SK-N-SH (cell line): ENCODE measurements at regions of chr10 and their contacts with region 1.

Region 1: DNA sequence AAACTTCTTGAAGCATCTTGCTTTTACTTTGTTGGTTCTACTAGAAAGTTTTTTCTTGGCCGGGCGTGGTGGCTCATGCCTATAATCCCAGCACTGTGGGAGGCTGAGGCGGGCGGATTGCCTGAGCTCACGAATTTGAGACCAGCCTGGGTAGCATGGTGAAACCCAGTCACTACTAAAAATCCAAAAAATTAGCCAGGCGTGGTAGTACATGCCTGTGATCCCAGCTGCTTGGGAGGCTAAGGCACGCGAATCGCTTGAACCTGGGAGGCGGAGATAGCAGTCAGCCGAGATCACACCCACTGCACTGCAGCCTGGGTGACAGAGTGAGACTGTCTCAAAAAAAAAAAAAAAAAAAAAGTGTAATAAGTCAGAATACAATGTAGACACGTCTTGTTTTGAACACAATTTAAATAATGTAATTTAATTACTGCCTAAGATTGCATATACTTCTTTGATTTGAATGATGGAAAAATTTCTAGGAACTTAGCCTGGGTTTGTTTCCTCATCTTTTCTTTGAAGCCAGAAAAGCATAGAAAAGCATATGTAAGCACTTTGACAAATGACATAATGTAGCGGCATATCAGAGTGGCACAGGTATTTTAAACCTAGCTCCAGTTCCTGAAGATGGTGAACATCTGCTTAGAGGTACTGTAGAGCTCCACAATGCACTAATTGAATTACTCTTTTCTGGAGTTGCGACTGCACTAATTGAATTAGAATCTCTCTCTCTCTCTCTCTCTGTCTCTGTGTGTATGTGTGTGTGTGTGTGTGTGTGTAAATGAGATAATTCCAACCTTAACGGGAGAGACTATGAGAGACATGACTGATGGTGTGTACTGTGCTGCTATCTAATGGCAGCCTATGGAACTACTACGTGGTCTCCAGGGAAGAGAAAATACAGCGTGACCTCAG is 87.8 kb downstream of the BTRC start:
- DNase-seq: peak; percentile 65
- H3K4me3 ChIP-seq: no peak overlapping the region
- H3K27ac ChIP-seq: no peak overlapping the region
- H3K4me1 ChIP-seq: peaks cover 0 to 9% of the 10 kb centered on the region in 2 experiments; a peak in 2 of 4 replicates
- H3K27me3 ChIP-seq: no peaks in the 10 kb centered on the region
- CTCF ChIP-seq: peak; percentile 68
- EP300 ChIP-seq: no peak
- RAD21 ChIP-seq: peak; percentile 90

Region 2: DNA sequence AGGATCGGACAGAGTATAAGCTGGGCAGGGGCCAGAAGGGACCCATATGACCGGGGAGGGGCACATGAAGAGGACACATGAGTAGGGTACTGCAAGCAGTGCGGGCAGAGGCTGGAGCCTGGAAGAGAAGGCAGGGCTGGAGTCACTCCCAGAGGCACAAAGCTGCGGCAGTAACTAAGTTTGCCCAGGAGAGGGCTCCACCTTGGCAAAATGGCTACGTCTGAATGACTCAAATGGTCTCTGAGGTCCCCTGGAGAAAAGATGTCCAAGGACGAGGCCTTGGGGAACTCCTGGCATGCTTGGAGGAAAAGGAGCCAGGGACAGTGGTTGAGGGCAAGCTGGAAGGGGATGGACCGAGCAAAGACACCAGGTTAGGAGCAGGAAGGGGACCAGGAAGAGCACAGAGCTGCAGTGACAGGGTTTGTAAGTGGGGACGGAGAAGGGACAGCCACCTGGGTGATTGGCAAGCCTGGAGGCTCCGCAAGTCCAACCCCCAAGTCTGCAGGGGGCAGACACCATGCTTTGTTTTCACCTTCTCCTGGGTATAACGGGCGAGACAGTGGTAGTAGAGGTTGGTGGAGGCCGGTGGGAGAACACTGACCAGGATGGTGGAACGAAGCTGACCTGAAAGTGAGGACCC is 169.4 kb before region 1 on chr10:
- CTCF ChIA-PET with region 1: interaction called, 13 read pairs
- POLR2A ChIA-PET with region 1: no interaction called
- DNase-seq: peak; percentile 83
- H3K4me3 ChIP-seq: no peak overlapping the region
- H3K27ac ChIP-seq: no peak overlapping the region
- H3K4me1 ChIP-seq: no peaks in the 10 kb centered on the region; a peak in 1 of 4 replicates
- H3K27me3 ChIP-seq: peaks cover 8% of the 10 kb centered on the region; the same call in 1 of the 2 replicates
- CTCF ChIP-seq: peak; percentile 76
- EP300 ChIP-seq: no peak
- RAD21 ChIP-seq: peak; percentile 66

Region 3: DNA sequence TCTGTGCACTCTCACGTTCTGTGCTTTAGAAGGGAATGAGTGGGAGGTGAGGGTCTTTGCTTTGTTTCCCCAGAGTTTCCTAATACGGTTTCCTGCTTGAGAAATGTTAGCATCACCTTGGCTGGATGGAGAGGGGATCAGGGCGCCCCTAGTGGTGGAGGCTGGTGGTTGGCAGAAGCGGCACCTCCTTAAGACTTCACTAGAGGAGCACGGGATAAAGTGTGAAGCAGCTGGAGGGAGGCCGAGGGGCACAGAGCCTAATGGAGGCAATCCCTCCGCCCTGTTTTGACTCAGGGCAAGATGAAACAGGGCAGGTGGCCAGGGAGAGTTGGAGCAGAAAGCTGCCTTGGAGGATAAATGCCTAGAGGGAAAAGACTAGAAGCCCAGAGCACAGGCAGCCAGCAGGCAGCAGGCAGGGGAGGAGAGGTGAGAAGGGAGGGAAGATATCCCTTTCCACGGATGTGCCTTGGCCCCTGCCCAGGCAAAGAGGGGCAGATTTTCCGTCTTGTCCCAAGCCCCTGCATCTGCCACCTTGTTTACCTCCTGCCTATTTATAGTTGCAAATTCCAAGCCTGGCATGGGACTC is 143.8 kb before region 1 on chr10:
- CTCF ChIA-PET with region 1: interaction called, 243 read pairs
- POLR2A ChIA-PET with region 1: interaction called, 4 read pairs
- DNase-seq: peak; percentile 61
- H3K4me3 ChIP-seq: peak overlapping the region in 1 of 2 experiments; percentile 33; a peak in 1 of 4 replicates
- H3K27ac ChIP-seq: no peak overlapping the region
- H3K4me1 ChIP-seq: peaks cover 0 to 5% of the 10 kb centered on the region in 2 experiments; a peak in 1 of 4 replicates
- H3K27me3 ChIP-seq: peaks cover 29% of the 10 kb centered on the region; the same call in 1 of the 2 replicates
- CTCF ChIP-seq: peak; percentile 78
- EP300 ChIP-seq: no peak
- RAD21 ChIP-seq: peak; percentile 29

Region 4: GRCh38 chr10:101353692-101354327 is 88.0 kb before region 1 on chr10 and contains the start of gene BTRC:
- CTCF ChIA-PET with region 1: interaction called, 11 read pairs
- POLR2A ChIA-PET with region 1: no interaction called
- DNase-seq: peak; percentile 93
- H3K4me3 ChIP-seq: peak within 1 kb of the TSS; percentile 66 to 84
- H3K27ac ChIP-seq: peak within 1 kb of the TSS; percentile 83 to 89
- H3K4me1 ChIP-seq: peaks cover 7 to 9% of the 10 kb centered on the region in 2 experiments; a peak in 3 of 4 replicates
- H3K27me3 ChIP-seq: no peaks in the 10 kb centered on the region; the same call in 1 of the 2 replicates
- CTCF ChIP-seq: no peak
- EP300 ChIP-seq: no peak
- RAD21 ChIP-seq: no peak; the same call in 1 of the 2 replicates
- polyA plus RNA-seq, gene BTRC: 6.5 and 8.1 TPM in 2 replicates

Region 5: GRCh38 chr10:101453791-101454718 is 12.3 kb after region 1 on chr10:
- CTCF ChIA-PET with region 1: interaction called, 15 read pairs
- POLR2A ChIA-PET with region 1: interaction called, 3 read pairs
- DNase-seq: no peak
- H3K4me3 ChIP-seq: no peak overlapping the region
- H3K27ac ChIP-seq: peak overlapping the region in 1 of 2 experiments; percentile 12; a peak in 1 of 4 replicates
- H3K4me1 ChIP-seq: peaks cover 0 to 34% of the 10 kb centered on the region in 2 experiments; a peak in 2 of 4 replicates
- H3K27me3 ChIP-seq: no peaks in the 10 kb centered on the region
- CTCF ChIP-seq: no peak
- EP300 ChIP-seq: no peak
- RAD21 ChIP-seq: no peak

Region 6: DNA sequence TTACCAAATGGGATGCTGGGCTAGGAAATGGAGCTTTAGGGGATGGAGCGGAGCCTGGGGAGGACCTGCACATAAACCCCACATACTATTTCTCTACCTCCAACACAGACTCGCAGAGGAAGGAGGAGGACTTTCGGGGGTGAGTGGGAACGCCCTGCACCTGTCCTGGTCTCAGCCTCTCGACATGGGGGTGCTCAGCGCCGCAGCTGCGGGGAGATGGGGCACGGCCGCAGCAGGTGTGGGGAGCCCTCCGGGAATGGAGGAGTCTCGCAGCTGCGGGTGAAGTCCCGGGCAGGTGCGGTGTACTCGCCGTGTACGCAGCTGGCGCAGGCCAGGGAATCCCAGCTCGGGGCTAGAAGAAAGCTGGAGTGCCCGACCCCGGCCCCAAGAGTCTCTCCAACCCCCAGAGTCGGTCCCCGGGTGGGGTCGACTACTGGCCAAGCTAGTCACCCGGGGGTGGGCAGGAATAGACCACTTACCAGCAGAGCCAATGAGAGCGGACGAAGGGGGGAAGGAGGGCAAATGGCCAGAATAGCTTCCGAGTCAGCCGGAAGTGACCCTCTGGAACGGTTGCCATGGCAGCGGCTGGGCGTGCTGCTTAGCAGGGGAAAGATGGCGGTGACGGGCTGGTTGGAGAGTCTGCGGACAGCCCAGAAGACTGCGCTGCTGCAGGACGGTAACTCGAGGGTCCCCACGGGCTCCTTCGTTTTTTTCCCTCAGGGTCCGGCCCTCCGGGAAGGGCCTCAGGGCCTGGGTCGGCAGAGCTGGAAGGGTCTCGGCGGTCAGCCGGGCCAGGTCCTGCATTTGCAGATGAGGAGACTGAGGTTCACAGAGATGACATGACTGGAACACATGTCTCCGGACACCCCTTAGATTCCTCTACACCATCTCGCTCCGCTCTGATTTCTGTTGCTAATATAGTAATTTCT is 146.2 kb after region 1 on chr10 and contains the starts of genes DPCD and POLL:
- CTCF ChIA-PET with region 1: no interaction called
- POLR2A ChIA-PET with region 1: no interaction called
- DNase-seq: peak; percentile 97
- H3K4me3 ChIP-seq: peak within 1 kb of the TSS; percentile 92 to 94
- H3K27ac ChIP-seq: peak within 1 kb of the TSS; percentile 17 to 76; a peak in 2 of 4 replicates
- H3K4me1 ChIP-seq: peaks cover 13 to 26% of the 10 kb centered on the region in 2 experiments; a peak in 2 of 4 replicates
- H3K27me3 ChIP-seq: no peaks in the 10 kb centered on the region
- CTCF ChIP-seq: no peak
- EP300 ChIP-seq: no peak
- RAD21 ChIP-seq: no peak
- polyA plus RNA-seq, gene DPCD: 106 and 121 TPM in 2 replicates
- polyA plus RNA-seq, gene POLL: 22.0 and 27.3 TPM in 2 replicates

Region 7: DNA sequence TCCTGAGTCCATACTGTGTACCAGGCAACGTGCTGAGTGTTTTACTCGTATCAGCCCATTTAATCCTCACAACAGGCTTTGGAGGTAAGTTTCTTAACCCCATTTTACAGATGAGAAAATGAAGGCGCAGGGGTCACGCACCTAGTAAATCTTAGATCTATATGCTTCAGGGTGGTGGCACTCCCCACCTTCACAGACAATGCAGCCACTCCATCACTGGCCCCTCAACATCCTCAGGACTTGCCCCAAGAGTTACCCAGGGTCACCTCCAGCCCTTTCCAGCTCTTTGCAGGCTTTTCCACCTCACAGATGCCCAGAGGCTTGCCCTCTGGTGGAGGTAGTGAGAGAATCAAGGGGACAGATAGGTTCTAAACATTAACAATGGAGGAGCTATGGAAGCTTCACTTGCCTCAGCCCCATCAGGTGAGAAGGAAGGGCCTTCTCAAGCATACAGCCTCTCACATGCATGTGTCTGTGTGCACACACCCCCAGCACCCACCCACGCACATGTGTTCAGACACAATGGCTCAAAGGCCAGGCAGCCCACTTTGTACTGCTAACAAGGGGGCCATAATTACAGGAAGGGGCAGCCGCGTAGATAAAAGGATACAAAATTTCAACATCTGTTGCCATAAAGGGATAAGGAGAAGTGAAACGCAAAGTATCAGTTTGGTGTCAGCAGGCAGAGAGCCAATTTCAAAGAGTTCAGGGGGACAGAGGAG is 175.5 kb after region 1 on chr10:
- CTCF ChIA-PET with region 1: no interaction called
- POLR2A ChIA-PET with region 1: no interaction called
- DNase-seq: peak; percentile 52
- H3K4me3 ChIP-seq: no peak overlapping the region
- H3K27ac ChIP-seq: peak overlapping the region in 1 of 2 experiments; percentile 76; a peak in 2 of 4 replicates
- H3K4me1 ChIP-seq: peaks cover 0 to 54% of the 10 kb centered on the region in 2 experiments; a peak in 2 of 4 replicates
- H3K27me3 ChIP-seq: no peaks in the 10 kb centered on the region
- CTCF ChIP-seq: no peak
- EP300 ChIP-seq: no peak
- RAD21 ChIP-seq: no peak